Activated naive CD4-positive, alpha-beta T cell treated with anti-CD3 and anti-CD28 coated beads for 36 hours (primary cell): ENCODE measurements at regions of chr9 and their contacts with region 1.

Region 1: GRCh38 chr9:122453677-122454135 is 24.0 kb downstream of the OR1J1 start:
- DNase-seq: no peak
- H3K4me3 Mint-ChIP-seq: no peak overlapping the region
- H3K27ac Mint-ChIP-seq: no peak overlapping the region
- H3K4me1 Mint-ChIP-seq: no peaks in the 10 kb centered on the region
- H3K27me3 Mint-ChIP-seq: peaks cover 11% of the 10 kb centered on the region

Region 2: DNA sequence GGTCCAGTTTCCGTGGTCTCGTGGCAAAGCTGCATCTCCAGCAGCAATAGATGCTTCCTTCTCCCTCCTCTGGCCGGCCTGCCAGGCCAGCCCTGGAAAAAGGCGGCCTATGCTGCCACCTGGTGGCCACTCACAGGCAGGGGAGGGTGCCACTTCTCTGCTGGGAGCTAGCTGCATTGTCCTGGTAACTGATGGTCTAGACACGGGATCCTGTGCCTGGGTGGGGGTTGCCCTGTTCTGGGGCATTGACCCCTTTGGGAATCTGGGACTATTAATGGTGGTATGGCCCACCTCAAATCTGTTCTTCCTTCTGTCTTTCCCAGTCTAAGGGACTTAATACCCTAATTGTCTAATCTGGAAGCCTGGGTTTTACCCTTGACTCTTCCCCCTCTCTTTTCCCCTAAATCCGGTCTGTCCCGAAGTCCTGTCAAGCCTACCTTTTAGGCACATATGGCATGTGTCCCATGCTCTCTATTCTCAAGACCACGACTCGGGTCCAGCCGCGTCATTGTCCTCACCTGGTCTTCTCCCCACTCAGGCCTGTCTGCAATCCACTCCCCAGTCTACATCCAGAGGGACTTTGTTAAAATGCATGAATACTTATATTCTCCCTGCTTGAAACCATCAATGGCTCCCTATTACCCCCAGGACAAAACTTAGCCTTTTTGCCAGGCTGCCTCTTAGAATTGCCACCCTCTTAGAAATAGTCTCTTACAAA is 102.9 kb before region 1 on chr9:
- CTCF ChIA-PET with region 1: interaction called, 5 read pairs
- intact Hi-C with region 1: loop called (anchors 1 kb)
- DNase-seq: peak; percentile 82
- H3K4me3 Mint-ChIP-seq: no peak overlapping the region
- H3K27ac Mint-ChIP-seq: no peak overlapping the region
- H3K4me1 Mint-ChIP-seq: peaks cover 2% of the 10 kb centered on the region
- H3K27me3 Mint-ChIP-seq: peaks cover 29% of the 10 kb centered on the region

Region 3: GRCh38 chr9:122379340-122379739 is 74.4 kb before region 1 on chr9:
- CTCF ChIA-PET with region 1: interaction called, 3 read pairs
- intact Hi-C with region 1: loop called (anchors 1 kb)
- DNase-seq: peak; percentile 27
- H3K4me3 Mint-ChIP-seq: no peak overlapping the region
- H3K27ac Mint-ChIP-seq: no peak overlapping the region
- H3K4me1 Mint-ChIP-seq: no peaks in the 10 kb centered on the region
- H3K27me3 Mint-ChIP-seq: peaks cover 10% of the 10 kb centered on the region

Region 4: DNA sequence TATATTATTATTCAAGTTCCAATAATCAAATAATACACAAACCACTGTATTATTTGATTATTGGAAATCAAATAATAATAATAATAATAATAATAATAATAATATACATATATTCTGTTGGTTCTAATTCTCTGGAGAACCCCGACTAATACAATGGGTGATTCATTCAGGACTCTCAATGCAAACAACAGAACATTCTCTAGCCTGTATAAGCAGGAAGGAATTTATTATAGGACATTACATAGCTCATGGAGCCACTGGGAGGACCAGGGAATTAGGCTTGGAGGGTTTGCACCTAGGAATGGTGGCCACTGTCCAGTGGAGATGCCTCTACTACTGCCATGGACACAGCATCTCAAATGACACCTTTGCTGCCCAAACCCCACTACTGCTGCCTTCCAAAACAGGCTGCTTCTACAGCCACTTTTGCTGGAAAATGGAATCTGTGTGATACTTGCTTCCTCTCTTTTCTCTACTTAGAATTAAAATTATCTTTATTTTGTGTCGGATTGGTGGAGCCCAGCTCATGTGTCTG is 57.0 kb before region 1 on chr9:
- CTCF ChIA-PET with region 1: no interaction called
- intact Hi-C with region 1: no loop called
- DNase-seq: no peak
- H3K4me3 Mint-ChIP-seq: no peak overlapping the region
- H3K27ac Mint-ChIP-seq: no peak overlapping the region
- H3K4me1 Mint-ChIP-seq: no peaks in the 10 kb centered on the region
- H3K27me3 Mint-ChIP-seq: peaks cover 8% of the 10 kb centered on the region